Endothelial cell of umbilical vein (primary cell): ENCODE measurements at regions of chr1 and their contacts with region 1.

Region 1: DNA sequence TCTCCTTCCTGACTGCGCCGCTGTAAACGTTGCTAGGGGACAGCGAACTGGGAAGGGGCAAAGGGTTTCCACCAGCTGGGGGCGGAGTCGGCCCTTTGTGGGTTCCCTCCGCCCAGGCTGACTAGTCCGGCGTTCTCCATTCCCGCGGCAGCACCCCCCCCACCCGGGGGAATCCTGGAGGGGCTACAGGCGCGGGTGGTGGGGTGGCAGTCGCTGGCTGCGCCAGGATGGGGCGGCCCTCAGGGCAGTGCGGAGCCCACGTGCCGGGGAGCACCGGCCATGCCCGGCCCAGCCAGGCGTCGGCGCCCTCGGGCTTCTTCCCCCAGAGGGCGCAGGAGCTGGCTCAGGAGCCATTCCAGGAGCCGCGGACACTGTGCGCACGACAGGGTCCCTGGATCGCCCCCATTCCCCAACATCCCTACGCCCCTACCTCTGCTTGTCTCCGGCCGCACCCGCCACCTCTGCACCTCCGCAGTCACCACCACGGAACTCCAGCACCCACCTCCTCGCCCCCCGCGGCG is 476 bp downstream of the BATF3 start:
- DNase-seq: peak; percentile 18
- H3K4me3 ChIP-seq: peak overlapping the region in 1 of 3 experiments; percentile 38
- H3K27ac ChIP-seq: no peak overlapping the region
- H3K4me1 ChIP-seq: peaks cover 16% of the 10 kb centered on the region
- H3K27me3 ChIP-seq: peaks cover 37 to 62% of the 10 kb centered on the region in 2 experiments
- CTCF ChIP-seq: peak; percentile 33 to 75
- POLR2A ChIP-seq: no peak

Region 2: GRCh38 chr1:211738691-211739301 is 960.4 kb before region 1 on chr1:
- CTCF ChIA-PET with region 1: no interaction called
- POLR2A ChIA-PET with region 1: no interaction called
- dilution Hi-C with region 1: no loop called
- intact Hi-C with region 1: no loop called
- DNase-seq: no peak
- H3K4me3 ChIP-seq: no peak overlapping the region
- H3K27ac ChIP-seq: no peak overlapping the region
- H3K4me1 ChIP-seq: peaks cover 4% of the 10 kb centered on the region
- H3K27me3 ChIP-seq: no peaks in the 10 kb centered on the region
- CTCF ChIP-seq: no peak
- POLR2A ChIP-seq: no peak

Region 3: GRCh38 chr1:212341090-212341489 is 358.1 kb before region 1 on chr1:
- CTCF ChIA-PET with region 1: no interaction called
- POLR2A ChIA-PET with region 1: no interaction called
- dilution Hi-C with region 1: no loop called
- intact Hi-C with region 1: loop called (anchors 5 kb)
- DNase-seq: no peak
- H3K4me3 ChIP-seq: no peak overlapping the region
- H3K27ac ChIP-seq: no peak overlapping the region
- H3K4me1 ChIP-seq: no peaks in the 10 kb centered on the region
- H3K27me3 ChIP-seq: no peaks in the 10 kb centered on the region
- CTCF ChIP-seq: no peak
- POLR2A ChIP-seq: no peak